ENCODE measurements at regions of chr6 and their contacts with region 1.

Region 1: GRCh38 chr6:31356946-31357466 is at the start of gene HLA-B:
- DNase-seq: peak; percentile 82 to 94 (median 89)
- H3K4me3 ChIP-seq: peak within 1 kb of the TSS; percentile 61
- H3K27ac ChIP-seq: peak within 1 kb of the TSS; percentile 62 to 88
- H3K4me1 ChIP-seq: no peaks in the 10 kb centered on the region
- H3K27me3 ChIP-seq: no peaks in the 10 kb centered on the region
- CTCF ChIP-seq: no peak
- EP300 ChIP-seq: no peak
- POLR2A ChIP-seq: peak; percentile 88
- total RNA-seq, gene HLA-B: 358 to 625 (median 492) TPM

Region 2: DNA sequence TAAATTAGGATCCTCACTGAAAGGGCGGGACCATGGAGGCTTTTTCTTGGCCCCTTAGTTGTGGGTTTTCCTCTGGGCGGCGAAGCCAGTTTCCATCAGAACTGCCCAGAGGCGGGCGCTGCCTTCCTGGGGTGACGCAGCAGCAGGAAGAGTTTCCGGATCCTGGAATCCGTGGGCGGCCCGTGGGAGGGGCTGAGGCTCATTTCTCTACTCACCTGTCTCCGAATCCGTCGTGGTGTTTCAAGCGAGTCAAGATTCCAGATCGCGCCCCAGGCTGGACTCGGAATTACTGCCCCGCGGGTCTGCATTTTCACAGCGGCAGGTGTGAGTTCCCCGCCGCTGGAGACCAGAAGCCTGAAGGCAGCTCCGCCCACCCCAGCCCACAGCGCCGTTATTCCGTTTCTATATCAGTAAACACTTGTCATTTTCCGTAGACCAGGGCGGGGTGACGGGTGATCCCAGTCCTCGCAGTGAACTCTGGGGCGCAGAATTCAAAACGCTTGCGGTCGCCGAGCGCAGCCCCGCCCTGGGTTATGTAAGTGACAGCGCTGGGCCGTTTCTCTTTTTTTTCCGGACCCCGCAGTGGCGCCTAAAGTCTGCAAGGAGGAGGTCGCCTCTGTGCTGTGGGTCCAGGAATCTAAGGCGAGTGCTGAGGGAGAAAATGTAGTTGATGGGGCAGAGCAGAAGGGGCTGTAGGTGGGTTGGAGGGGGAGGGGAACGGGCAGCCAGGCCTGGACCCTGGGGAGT is 159.3 kb before region 1 on chr6:
- intact Hi-C with region 1: loop called in 3 of 4 experiments (anchors 5 to 10 kb)
- DNase-seq: peak; percentile 88 to 91 (median 89)
- H3K4me3 ChIP-seq: peak overlapping the region; percentile 81
- H3K27ac ChIP-seq: peak overlapping the region; percentile 80 to 88
- H3K4me1 ChIP-seq: peaks cover 2% of the 10 kb centered on the region
- H3K27me3 ChIP-seq: no peaks in the 10 kb centered on the region
- CTCF ChIP-seq: peak in 2 of 3 donors; percentile 6 to 17
- EP300 ChIP-seq: peak; percentile 29
- POLR2A ChIP-seq: peak; percentile 78

Region 3: GRCh38 chr6:31203345-31203979 is 153.5 kb before region 1 on chr6:
- intact Hi-C with region 1: loop called in 3 of 4 experiments (anchors 5 to 10 kb)
- DNase-seq: no peak
- H3K4me3 ChIP-seq: peak overlapping the region; percentile 40
- H3K27ac ChIP-seq: peak overlapping the region in 1 of 2 donors; percentile 29
- H3K4me1 ChIP-seq: peaks cover 3% of the 10 kb centered on the region
- H3K27me3 ChIP-seq: no peaks in the 10 kb centered on the region
- CTCF ChIP-seq: no peak
- EP300 ChIP-seq: no peak
- POLR2A ChIP-seq: no peak

Region 4: GRCh38 chr6:31271641-31272357 is 85.2 kb before region 1 on chr6 and contains the start of gene HLA-C:
- intact Hi-C with region 1: loop called in 2 of 4 experiments (anchors 5 to 10 kb)
- DNase-seq: peak; percentile 89 to 94 (median 90)
- H3K4me3 ChIP-seq: peak within 1 kb of the TSS; percentile 91
- H3K27ac ChIP-seq: peak within 1 kb of the TSS in 1 of 2 donors; percentile 98
- H3K4me1 ChIP-seq: no peaks in the 10 kb centered on the region
- H3K27me3 ChIP-seq: no peaks in the 10 kb centered on the region
- CTCF ChIP-seq: peak in 1 of 3 donors; percentile 40
- EP300 ChIP-seq: no peak
- POLR2A ChIP-seq: peak; percentile 86
- total RNA-seq, gene HLA-C: 195 to 480 (median 354) TPM